ENCODE measurements at regions of chr14 and their contacts with region 1.

Region 1: DNA sequence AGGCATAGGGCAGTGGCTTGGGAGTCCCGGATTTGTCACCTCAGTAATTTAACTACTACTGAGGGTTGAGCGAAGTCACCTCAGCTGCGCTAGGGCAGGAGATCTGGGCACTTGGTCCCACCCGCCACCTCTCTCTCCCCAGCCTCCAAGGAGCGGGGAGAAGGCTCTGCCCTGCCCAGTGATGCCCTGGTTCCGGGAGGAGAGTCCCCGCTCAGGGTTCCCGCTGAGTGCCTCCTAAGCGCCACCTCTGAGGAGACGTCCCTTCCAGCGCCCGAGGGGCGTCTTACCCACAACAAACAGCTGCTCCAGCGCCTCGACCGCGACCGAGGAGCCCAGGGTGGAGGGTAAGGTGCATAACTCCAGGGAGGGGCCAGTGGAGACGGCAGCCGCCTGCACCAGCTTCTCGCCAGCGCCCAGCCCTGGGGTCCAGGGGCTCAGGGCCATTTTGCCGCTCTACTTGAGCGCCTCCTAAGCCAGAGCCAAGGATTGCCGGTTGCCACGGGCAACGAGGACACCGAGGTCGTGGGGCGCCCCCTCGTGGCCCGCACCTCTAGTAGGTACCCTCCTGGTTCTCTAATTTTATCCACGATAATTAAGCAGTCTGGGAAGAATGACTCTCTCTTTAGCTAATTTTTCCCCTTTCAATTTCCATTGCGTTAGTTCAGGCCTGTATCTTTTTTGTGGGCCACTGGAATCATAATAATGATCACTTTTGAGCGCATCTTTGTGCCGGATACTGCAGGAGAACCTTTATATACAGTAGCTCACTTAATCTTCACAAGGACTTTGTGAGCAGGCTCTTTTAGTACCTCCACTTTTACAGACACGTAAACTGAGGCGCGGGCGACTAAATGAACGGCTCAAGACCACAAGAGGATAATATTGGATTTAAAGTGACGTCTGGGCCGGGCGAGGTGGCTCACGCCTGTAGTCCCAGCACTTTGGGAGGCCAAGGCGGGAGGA is at the start of gene CCDC175:
- DNase-seq: peak; percentile 89
- H3K4me3 ChIP-seq: peak within 1 kb of the TSS; percentile 48 to 59
- H3K27ac ChIP-seq: no peak within 1 kb of the TSS; a peak in 1 of 4 replicates
- H3K4me1 ChIP-seq: peaks cover 0 to 4% of the 10 kb centered on the region in 2 experiments; a peak in 2 of 4 replicates
- H3K27me3 ChIP-seq: peaks cover 6% of the 10 kb centered on the region; the same call in 1 of the 2 replicates
- CTCF ChIP-seq: peak; percentile 78
- EP300 ChIP-seq: no peak
- RAD21 ChIP-seq: peak; percentile 82
- polyA plus RNA-seq, gene CCDC175: not detected in 2 replicates

Region 2: DNA sequence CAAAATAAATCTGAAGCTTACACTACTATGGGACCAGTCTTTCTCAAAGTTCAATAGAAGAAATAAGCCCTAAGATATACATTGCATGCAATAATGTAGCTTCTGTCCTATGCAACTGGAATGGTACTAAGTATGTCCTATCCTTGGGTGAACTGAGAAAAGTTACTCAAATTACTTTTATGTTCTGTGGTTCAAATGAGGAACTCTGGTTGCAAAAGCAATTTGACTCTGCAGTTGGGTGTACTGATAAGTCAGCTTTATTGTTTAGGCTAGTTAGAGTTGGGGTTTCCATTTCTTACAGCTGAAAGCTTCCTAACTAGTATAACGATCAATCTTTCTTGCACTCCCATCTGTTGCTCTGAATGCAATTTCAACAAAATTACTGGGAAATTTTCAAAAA is 140.6 kb before region 1 on chr14:
- CTCF ChIA-PET with region 1: no interaction called
- POLR2A ChIA-PET with region 1: no interaction called
- DNase-seq: no peak
- H3K4me3 ChIP-seq: no peak overlapping the region
- H3K27ac ChIP-seq: no peak overlapping the region
- H3K4me1 ChIP-seq: peaks cover 0 to 21% of the 10 kb centered on the region in 2 experiments; a peak in 3 of 4 replicates
- H3K27me3 ChIP-seq: no peaks in the 10 kb centered on the region
- CTCF ChIP-seq: no peak
- EP300 ChIP-seq: no peak
- RAD21 ChIP-seq: no peak

Region 3: GRCh38 chr14:59490756-59491155 is 85.9 kb before region 1 on chr14:
- CTCF ChIA-PET with region 1: interaction called, 24 read pairs
- POLR2A ChIA-PET with region 1: no interaction called
- DNase-seq: no peak
- H3K4me3 ChIP-seq: no peak overlapping the region
- H3K27ac ChIP-seq: no peak overlapping the region
- H3K4me1 ChIP-seq: peaks cover 4 to 5% of the 10 kb centered on the region in 2 experiments; a peak in 2 of 4 replicates
- H3K27me3 ChIP-seq: no peaks in the 10 kb centered on the region
- CTCF ChIP-seq: no peak
- EP300 ChIP-seq: no peak
- RAD21 ChIP-seq: no peak

Region 4: GRCh38 chr14:59507063-59507780 is 69.4 kb before region 1 on chr14:
- CTCF ChIA-PET with region 1: interaction called, 198 read pairs
- POLR2A ChIA-PET with region 1: interaction called, 7 read pairs
- DNase-seq: peak; percentile 57
- H3K4me3 ChIP-seq: peak overlapping the region in 1 of 2 experiments; percentile 27; a peak in 1 of 4 replicates
- H3K27ac ChIP-seq: no peak overlapping the region
- H3K4me1 ChIP-seq: peaks cover 0 to 1% of the 10 kb centered on the region in 2 experiments; a peak in 1 of 4 replicates
- H3K27me3 ChIP-seq: no peaks in the 10 kb centered on the region; the same call in 1 of the 2 replicates
- CTCF ChIP-seq: peak; percentile 72
- EP300 ChIP-seq: no peak
- RAD21 ChIP-seq: peak; percentile 84

Region 5: DNA sequence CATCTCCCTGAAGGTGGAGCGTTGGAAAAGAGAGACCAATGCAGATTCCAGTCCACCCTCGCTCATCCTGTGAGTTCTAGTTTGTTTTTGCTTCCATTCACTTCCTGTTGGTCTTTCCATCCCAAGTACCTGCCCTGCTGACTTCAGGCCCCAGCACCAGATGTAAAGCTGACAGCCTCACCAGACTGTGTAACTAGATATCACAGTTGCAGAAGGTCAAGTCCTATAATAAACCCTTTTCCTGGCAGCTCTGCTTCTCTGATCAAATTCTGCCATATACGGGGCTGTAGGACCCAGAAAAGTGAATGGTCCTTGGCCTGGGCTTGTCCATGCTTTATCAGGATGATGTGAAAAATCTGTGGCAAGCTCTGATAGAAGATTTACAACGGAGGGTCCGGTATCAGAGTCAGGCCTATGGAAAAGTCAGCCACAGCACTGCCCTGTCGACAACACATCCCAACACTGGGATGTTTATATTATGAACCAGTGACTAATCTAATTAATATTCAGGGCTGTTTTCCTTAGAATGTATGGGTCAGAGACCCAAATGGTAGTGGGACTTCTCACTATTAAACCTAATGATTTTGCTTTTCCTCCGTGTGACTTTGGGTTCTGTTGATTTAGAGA is 42.1 kb before region 1 on chr14:
- CTCF ChIA-PET with region 1: interaction called, 17 read pairs
- POLR2A ChIA-PET with region 1: no interaction called
- DNase-seq: no peak
- H3K4me3 ChIP-seq: no peak overlapping the region
- H3K27ac ChIP-seq: no peak overlapping the region
- H3K4me1 ChIP-seq: peaks cover 0 to 6% of the 10 kb centered on the region in 2 experiments; a peak in 2 of 4 replicates
- H3K27me3 ChIP-seq: no peaks in the 10 kb centered on the region; the same call in 1 of the 2 replicates
- CTCF ChIP-seq: no peak
- EP300 ChIP-seq: no peak
- RAD21 ChIP-seq: no peak

Region 6: GRCh38 chr14:59595071-59595470 is 18.5 kb after region 1 on chr14:
- CTCF ChIA-PET with region 1: interaction called, 73 read pairs
- POLR2A ChIA-PET with region 1: no interaction called
- DNase-seq: no peak
- H3K4me3 ChIP-seq: no peak overlapping the region
- H3K27ac ChIP-seq: no peak overlapping the region
- H3K4me1 ChIP-seq: no peaks in the 10 kb centered on the region
- H3K27me3 ChIP-seq: no peaks in the 10 kb centered on the region
- CTCF ChIP-seq: no peak
- EP300 ChIP-seq: no peak
- RAD21 ChIP-seq: no peak

Region 7: GRCh38 chr14:60276342-60276741 is 699.7 kb after region 1 on chr14:
- CTCF ChIA-PET with region 1: no interaction called
- POLR2A ChIA-PET with region 1: no interaction called
- DNase-seq: no peak
- H3K4me3 ChIP-seq: no peak overlapping the region
- H3K27ac ChIP-seq: no peak overlapping the region
- H3K4me1 ChIP-seq: peaks cover 0 to 7% of the 10 kb centered on the region in 2 experiments; a peak in 2 of 4 replicates
- H3K27me3 ChIP-seq: no peaks in the 10 kb centered on the region
- CTCF ChIP-seq: no peak
- EP300 ChIP-seq: no peak
- RAD21 ChIP-seq: no peak

Measured in SK-N-SH (cell line).